ENCODE measurements at regions of chr2 and their contacts with region 1.

Region 1: GRCh38 chr2:31333527-31334183 is 80.9 kb downstream of the XDH start:
- DNase-seq: peak; percentile 87
- ATAC-seq: peak; percentile 93
- H3K4me3 Mint-ChIP-seq: no peak overlapping the region
- H3K27ac Mint-ChIP-seq: no peak overlapping the region
- H3K4me1 Mint-ChIP-seq: no peaks in the 10 kb centered on the region
- H3K27me3 Mint-ChIP-seq: no peaks in the 10 kb centered on the region

Region 2: GRCh38 chr2:30862054-30862651 is 471.5 kb before region 1 on chr2:
- CTCF ChIA-PET with region 1: interaction called, 11 read pairs
- POLR2A ChIA-PET with region 1: no interaction called
- intact Hi-C with region 1: loop called (anchors 2 to 10 kb)
- DNase-seq: peak; percentile 69
- ATAC-seq: no peak
- H3K4me3 Mint-ChIP-seq: no peak overlapping the region
- H3K27ac Mint-ChIP-seq: no peak overlapping the region
- H3K4me1 Mint-ChIP-seq: peaks cover 8% of the 10 kb centered on the region
- H3K27me3 Mint-ChIP-seq: peaks cover 8% of the 10 kb centered on the region

Region 3: GRCh38 chr2:31138037-31138962 is 195.4 kb before region 1 on chr2 and contains the start of gene GALNT14:
- CTCF ChIA-PET with region 1: interaction called, 5 read pairs
- POLR2A ChIA-PET with region 1: no interaction called
- intact Hi-C with region 1: loop called in 1 of 2 experiments (anchors 1 kb)
- DNase-seq: peak; percentile 74
- ATAC-seq: peak; percentile 79
- H3K4me3 Mint-ChIP-seq: peak within 1 kb of the TSS; percentile 64
- H3K27ac Mint-ChIP-seq: no peak within 1 kb of the TSS
- H3K4me1 Mint-ChIP-seq: peaks cover 7% of the 10 kb centered on the region
- H3K27me3 Mint-ChIP-seq: peaks cover 31% of the 10 kb centered on the region
- total RNA-seq, gene GALNT14: 0.48 to 0.83 TPM

Region 4: DNA sequence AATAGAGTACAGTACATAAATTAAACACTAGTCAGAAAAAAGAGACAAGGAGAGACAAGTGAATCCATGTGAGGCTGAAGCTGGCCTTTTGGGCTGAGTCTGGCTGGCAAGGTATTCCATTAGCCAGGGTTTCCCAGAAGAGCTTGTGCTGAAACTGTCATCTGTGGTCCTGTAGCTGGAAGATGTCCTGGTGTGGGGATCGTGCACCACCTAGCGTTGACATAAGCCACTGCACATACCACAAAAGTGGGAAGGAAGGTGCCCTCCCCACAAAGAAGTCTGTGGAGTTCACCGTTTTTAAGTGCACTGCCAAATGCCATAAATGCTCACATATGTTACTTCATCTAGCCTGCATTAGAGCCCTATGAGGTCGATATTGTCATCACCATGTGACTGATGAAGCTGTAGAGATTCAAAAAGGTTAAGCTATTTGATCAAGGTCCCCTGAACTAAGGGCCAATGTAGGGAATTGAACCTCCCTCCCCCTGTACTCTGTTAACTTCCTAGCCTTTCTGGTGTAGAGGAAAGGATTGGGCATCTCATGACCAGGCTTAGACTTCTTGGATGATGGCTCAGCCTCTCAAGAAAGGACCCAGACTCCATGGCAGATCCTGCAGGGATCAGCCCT is 163.5 kb before region 1 on chr2:
- CTCF ChIA-PET with region 1: interaction called, 18 read pairs
- POLR2A ChIA-PET with region 1: no interaction called
- intact Hi-C with region 1: loop called (anchors 1 kb)
- DNase-seq: peak; percentile 73
- ATAC-seq: peak; percentile 88
- H3K4me3 Mint-ChIP-seq: no peak overlapping the region
- H3K27ac Mint-ChIP-seq: no peak overlapping the region
- H3K4me1 Mint-ChIP-seq: peaks cover under 1% of the 10 kb centered on the region
- H3K27me3 Mint-ChIP-seq: no peaks in the 10 kb centered on the region

Region 5: GRCh38 chr2:31187166-31187565 is 146.5 kb before region 1 on chr2:
- CTCF ChIA-PET with region 1: no interaction called
- POLR2A ChIA-PET with region 1: no interaction called
- intact Hi-C with region 1: no loop called
- DNase-seq: no peak
- ATAC-seq: no peak
- H3K4me3 Mint-ChIP-seq: no peak overlapping the region
- H3K27ac Mint-ChIP-seq: no peak overlapping the region
- H3K4me1 Mint-ChIP-seq: no peaks in the 10 kb centered on the region
- H3K27me3 Mint-ChIP-seq: no peaks in the 10 kb centered on the region

Region 6: GRCh38 chr2:31233741-31234682 is 99.6 kb before region 1 on chr2 and contains the start of gene EHD3:
- CTCF ChIA-PET with region 1: interaction called, 8 read pairs
- POLR2A ChIA-PET with region 1: no interaction called
- intact Hi-C with region 1: loop called (anchors 1 to 5 kb)
- DNase-seq: peak; percentile 90
- ATAC-seq: peak; percentile 99
- H3K4me3 Mint-ChIP-seq: peak within 1 kb of the TSS; percentile 70
- H3K27ac Mint-ChIP-seq: peak within 1 kb of the TSS; percentile 34
- H3K4me1 Mint-ChIP-seq: peaks cover 19% of the 10 kb centered on the region
- H3K27me3 Mint-ChIP-seq: no peaks in the 10 kb centered on the region
- total RNA-seq, gene EHD3: 1.4 to 1.6 TPM